ENCODE measurements at regions of chr11 and their contacts with region 1.

Region 1: DNA sequence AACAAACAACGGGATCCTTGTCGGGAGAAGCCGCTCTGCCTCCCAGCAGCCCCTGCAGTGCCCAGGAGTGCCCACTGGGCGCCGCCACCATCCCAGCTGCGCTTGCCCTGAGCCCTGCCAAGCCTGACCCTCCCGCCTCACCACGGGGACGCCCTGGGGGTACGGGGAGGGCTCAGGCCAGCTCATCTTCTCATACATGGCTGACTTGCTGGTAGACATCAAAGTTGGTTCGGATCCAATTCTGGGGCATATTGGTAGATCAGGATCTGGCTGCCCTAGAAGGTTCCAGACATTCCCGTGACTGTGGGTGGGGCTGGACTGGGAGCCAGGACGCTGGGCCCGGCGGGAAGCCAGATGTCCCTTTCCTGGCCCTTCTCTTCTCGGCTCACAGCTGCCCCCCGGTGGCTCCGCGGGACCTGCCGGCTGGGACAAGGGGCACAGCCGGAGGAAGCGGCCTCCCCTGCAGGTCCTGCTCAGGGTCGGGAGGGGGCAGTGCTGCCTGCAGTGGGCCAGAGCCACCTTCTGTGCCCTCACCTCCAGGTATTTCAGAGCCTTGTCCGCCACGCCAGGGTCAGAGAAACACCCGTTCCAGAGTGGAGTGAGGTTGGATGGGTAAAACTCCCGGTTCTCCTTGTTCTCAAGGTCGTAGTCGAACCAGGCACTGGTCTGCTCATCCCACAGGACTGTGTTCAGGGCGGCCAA is 10.6 kb upstream of the TREH start:
- DNase-seq: peak; percentile 74
- ATAC-seq: peak; percentile 95
- H3K4me3 Mint-ChIP-seq: peak overlapping the region; percentile 79
- H3K27ac Mint-ChIP-seq: peak overlapping the region; percentile 15
- H3K4me1 Mint-ChIP-seq: peaks cover 12% of the 10 kb centered on the region
- H3K27me3 Mint-ChIP-seq: peaks cover 4% of the 10 kb centered on the region
- CTCF ChIP-seq: peak; percentile 55

Region 2: GRCh38 chr11:118734031-118734430 is 44.0 kb after region 1 on chr11:
- CTCF ChIA-PET with region 1: no interaction called
- POLR2A ChIA-PET with region 1: no interaction called
- intact Hi-C with region 1: loop called (anchors 5 kb)
- DNase-seq: no peak
- ATAC-seq: no peak
- H3K4me3 Mint-ChIP-seq: no peak overlapping the region
- H3K27ac Mint-ChIP-seq: no peak overlapping the region
- H3K4me1 Mint-ChIP-seq: no peaks in the 10 kb centered on the region
- H3K27me3 Mint-ChIP-seq: peaks cover 18% of the 10 kb centered on the region
- CTCF ChIP-seq: no peak

Region 3: GRCh38 chr11:118771547-118772288 is 81.7 kb after region 1 on chr11:
- CTCF ChIA-PET with region 1: interaction called, 6 read pairs
- POLR2A ChIA-PET with region 1: interaction called, 8 read pairs
- intact Hi-C with region 1: loop called (anchors 5 kb)
- DNase-seq: no peak
- ATAC-seq: no peak
- H3K4me3 Mint-ChIP-seq: peak overlapping the region; percentile 69
- H3K27ac Mint-ChIP-seq: peak overlapping the region; percentile 54
- H3K4me1 Mint-ChIP-seq: peaks cover 79% of the 10 kb centered on the region
- H3K27me3 Mint-ChIP-seq: no peaks in the 10 kb centered on the region
- CTCF ChIP-seq: no peak

Region 4: DNA sequence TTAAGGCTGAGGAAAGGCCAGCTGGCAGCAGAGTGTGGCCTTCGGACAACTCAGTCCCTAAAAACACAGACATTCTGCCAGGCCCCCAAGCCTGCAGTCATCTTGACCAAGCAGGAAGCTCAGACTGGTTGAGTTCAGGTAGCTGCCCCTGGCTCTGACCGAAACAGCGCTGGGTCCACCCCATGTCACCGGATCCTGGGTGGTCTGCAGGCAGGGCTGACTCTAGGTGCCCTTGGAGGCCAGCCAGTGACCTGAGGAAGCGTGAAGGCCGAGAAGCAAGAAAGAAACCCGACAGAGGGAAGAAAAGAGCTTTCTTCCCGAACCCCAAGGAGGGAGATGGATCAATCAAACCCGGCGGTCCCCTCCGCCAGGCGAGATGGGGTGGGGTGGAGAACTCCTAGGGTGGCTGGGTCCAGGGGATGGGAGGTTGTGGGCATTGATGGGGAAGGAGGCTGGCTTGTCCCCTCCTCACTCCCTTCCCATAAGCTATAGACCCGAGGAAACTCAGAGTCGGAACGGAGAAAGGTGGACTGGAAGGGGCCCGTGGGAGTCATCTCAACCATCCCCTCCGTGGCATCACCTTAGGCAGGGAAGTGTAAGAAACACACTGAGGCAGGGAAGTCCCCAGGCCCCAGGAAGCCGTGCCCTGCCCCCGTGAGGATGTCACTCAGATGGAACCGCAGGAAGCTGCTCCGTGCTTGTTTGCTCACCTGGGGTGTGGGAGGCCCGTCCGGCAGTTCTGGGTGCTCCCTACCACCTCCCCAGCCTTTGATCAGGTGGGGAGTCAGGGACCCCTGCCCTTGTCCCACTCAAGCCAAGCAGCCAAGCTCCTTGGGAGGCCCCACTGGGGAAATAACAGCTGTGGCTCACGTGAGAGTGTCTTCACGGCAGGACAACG is 205.4 kb after region 1 on chr11:
- CTCF ChIA-PET with region 1: interaction called, 6 read pairs
- POLR2A ChIA-PET with region 1: interaction called, 9 read pairs
- intact Hi-C with region 1: loop called (anchors 1 kb)
- DNase-seq: peak; percentile 62
- ATAC-seq: peak; percentile 70
- H3K4me3 Mint-ChIP-seq: peak overlapping the region; percentile 80
- H3K27ac Mint-ChIP-seq: peak overlapping the region; percentile 98
- H3K4me1 Mint-ChIP-seq: peaks cover 85% of the 10 kb centered on the region
- H3K27me3 Mint-ChIP-seq: no peaks in the 10 kb centered on the region
- CTCF ChIP-seq: no peak

Region 5: GRCh38 chr11:118907051-118908042 is 217.3 kb after region 1 on chr11:
- CTCF ChIA-PET with region 1: interaction called, 4 read pairs
- POLR2A ChIA-PET with region 1: no interaction called
- intact Hi-C with region 1: loop called (anchors 1 kb)
- DNase-seq: peak; percentile 77
- ATAC-seq: peak; percentile 85
- H3K4me3 Mint-ChIP-seq: no peak overlapping the region
- H3K27ac Mint-ChIP-seq: peak overlapping the region; percentile 53
- H3K4me1 Mint-ChIP-seq: peaks cover 39% of the 10 kb centered on the region
- H3K27me3 Mint-ChIP-seq: no peaks in the 10 kb centered on the region
- CTCF ChIP-seq: peak; percentile 64

Region 6: DNA sequence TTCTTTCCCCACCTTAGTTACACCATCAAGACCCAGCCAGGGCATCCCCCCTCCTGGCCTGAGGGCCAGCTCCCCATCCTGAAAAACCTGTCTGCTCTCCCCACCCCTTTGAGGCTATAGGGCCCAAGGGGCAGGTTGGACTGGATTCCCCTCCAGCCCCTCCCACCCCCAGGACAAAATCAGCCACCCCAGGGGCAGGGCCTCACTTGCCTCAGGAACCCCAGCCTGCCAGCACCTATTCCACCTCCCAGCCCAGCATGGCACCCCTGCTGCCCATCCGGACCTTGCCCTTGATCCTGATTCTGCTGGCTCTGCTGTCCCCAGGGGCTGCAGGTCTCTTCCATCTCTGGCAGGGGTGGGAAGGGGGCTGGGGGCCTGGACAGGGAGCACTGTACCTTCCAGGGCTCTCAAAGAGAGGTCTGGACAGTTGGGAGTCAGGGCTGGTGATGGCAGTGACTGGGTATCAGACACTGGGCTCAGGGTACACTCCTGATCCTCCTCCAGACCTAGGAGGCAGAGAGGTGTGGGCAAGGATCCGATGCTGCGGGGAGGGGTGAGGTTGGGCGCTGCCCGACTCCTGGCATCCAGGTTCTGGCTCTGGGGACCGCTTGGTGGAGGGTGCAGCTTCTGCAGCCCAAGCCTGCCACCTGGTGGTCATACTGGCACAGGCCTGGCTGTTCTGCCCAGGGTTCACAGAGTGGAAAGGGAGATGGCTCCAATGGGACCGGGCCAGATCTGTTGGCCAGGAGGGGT is 266.3 kb after region 1 on chr11 and contains the start of gene UPK2:
- CTCF ChIA-PET with region 1: interaction called, 14 read pairs
- POLR2A ChIA-PET with region 1: interaction called, 10 read pairs
- intact Hi-C with region 1: loop called (anchors 1 kb)
- DNase-seq: peak; percentile 81
- ATAC-seq: peak; percentile 99
- H3K4me3 Mint-ChIP-seq: no peak within 1 kb of the TSS
- H3K27ac Mint-ChIP-seq: no peak within 1 kb of the TSS
- H3K4me1 Mint-ChIP-seq: peaks cover 3% of the 10 kb centered on the region
- H3K27me3 Mint-ChIP-seq: peaks cover 26% of the 10 kb centered on the region
- CTCF ChIP-seq: peak; percentile 62
- total RNA-seq, gene UPK2: 0.27 TPM in 1 of 2 replicates, not detected in the other

Measured in activated B cell treated with CpG ODN at 0.5 μM for 24 hours (primary cell).